ENCODE measurements at regions of chr17 and their contacts with region 1.

Region 1: GRCh38 chr17:81401723-81402529 is 6.7 kb downstream of the BAHCC1 start:
- DNase-seq: peak; percentile 55
- H3K4me3 ChIP-seq: peak overlapping the region in 1 of 4 donors; percentile 12
- H3K27ac ChIP-seq: peak overlapping the region; percentile 95 to 99 (median 98)
- H3K4me1 ChIP-seq: peaks cover 27 to 77% (median 58%) of the 10 kb centered on the region in 4 donors
- H3K27me3 ChIP-seq: no peaks in the 10 kb centered on the region
- CTCF ChIP-seq: peak in 2 of 5 experiments; percentile 7 to 21
- EP300 ChIP-seq: no peak
- POLR2A ChIP-seq: no peak

Region 2: DNA sequence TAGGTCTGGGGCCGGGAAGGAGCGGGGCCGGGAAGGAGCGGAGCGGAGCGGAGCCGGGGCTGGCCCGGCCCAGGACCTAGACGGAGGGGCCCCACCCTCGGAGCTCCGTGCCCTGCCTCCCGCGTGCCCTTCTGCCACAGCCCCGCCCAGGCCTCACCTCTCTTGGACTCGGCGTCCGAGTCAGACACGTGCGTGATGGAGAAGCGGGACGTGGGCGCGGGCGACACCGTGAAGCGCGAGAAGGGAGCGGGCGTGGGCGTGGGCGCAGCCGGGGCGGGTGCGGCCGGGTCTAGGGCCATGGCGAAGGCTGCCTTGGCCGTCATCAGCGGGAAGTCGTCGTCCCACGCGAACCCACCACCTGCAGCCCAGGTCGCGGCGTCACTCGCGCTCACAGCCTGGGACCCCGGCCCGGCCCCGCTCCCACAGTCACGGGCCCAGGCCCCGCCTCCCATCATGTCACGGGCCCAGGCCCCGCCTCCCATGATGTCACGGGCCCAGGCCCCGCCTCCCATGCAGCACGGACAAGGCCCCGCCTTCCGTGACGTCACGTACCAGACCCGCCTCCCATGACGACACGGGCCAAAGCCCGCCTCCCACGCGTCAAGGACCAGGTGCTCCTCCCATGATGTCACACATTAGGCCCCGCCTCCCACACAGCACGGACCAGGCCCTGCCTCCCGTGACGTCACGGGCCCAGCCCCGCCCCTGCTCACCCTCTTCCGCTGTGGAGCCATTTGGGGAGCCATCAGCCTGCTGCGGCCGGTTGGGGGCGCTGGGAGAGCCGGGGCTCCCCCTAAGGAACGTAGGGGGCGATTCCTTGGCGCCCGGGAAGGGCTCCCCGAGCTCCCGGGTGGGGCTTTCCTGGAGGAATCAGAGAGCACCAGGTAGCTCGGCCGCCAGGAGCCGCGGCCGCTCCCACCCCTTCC is 282.4 kb before region 1 on chr17:
- in situ Hi-C with region 1: no loop called
- intact Hi-C with region 1: no loop called
- DNase-seq: peak; percentile 71
- H3K4me3 ChIP-seq: peak overlapping the region in 2 of 4 donors; percentile 21 to 26
- H3K27ac ChIP-seq: no peak overlapping the region
- H3K4me1 ChIP-seq: peaks cover 0 to 9% (median 4%) of the 10 kb centered on the region in 4 donors
- H3K27me3 ChIP-seq: peaks cover 4% of the 10 kb centered on the region
- CTCF ChIP-seq: no peak
- EP300 ChIP-seq: no peak
- POLR2A ChIP-seq: no peak

Region 3: GRCh38 chr17:82457997-82458864 is 1056.3 kb after region 1 on chr17 and contains the start of gene NARF:
- in situ Hi-C with region 1: no loop called
- intact Hi-C with region 1: loop called (anchors 5 kb)
- DNase-seq: peak; percentile 98
- H3K4me3 ChIP-seq: peak within 1 kb of the TSS; percentile 67 to 80 (median 70)
- H3K27ac ChIP-seq: peak within 1 kb of the TSS; percentile 99 to 100 (median 100)
- H3K4me1 ChIP-seq: peaks cover 10 to 25% (median 19%) of the 10 kb centered on the region in 4 donors
- H3K27me3 ChIP-seq: no peaks in the 10 kb centered on the region
- CTCF ChIP-seq: no peak
- EP300 ChIP-seq: peak; percentile 21
- POLR2A ChIP-seq: peak; percentile 99
- total RNA-seq, gene NARF: 44.1 to 133 (median 61.1) TPM